Ascending aorta (tissue), 2 donors: ENCODE measurements at regions of chr7 and their contacts with region 1.

Region 1: GRCh38 chr7:148884299-148885022 is 370 bp upstream of the EZH2 start:
- DNase-seq: peak; percentile 75 to 95
- H3K4me3 ChIP-seq: peak overlapping the region; percentile 93
- H3K27ac ChIP-seq: peak overlapping the region; percentile 88 to 91
- H3K4me1 ChIP-seq: no peaks in the 10 kb centered on the region
- H3K27me3 ChIP-seq: no peaks in the 10 kb centered on the region
- CTCF ChIP-seq: no peak

Region 2: DNA sequence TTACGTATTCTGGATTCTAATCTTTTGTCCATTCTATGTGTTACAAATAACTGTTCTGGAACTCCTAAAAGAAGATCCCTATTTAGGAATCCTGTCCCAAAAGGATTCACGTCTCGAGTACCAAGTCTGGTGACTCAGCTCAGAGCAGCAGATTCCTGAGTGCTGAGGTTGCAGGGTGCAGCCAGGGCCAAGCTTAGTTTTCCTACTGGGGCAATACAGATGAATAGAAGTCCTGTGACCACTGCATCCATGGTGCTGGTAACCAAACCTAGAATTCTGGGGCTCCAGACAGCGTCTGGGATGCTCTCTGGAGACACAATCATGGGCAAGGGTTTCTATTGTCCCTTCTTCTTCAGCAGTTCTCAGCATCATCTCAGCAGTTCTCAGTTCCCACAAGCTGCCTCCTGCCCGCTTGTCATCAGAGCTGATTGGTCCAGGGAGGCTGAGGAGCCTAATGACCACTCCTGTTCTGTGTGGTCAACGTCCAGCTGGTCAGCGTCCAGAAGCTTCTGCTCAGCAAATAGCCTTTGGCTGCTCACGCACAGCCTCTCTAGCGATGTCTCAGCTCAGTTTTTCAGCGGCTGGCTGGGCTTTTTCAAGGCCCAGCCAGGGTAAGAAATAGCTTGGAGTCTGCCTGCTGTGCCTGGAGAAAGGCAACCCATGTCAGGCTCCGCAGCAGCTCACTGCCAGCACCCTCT is 344.3 kb before region 1 on chr7:
- intact Hi-C with region 1: loop called (anchors 10 kb)
- DNase-seq: peak; percentile 48 to 88
- H3K4me3 ChIP-seq: peak overlapping the region in 1 of 2 donors; percentile 30
- H3K27ac ChIP-seq: peak overlapping the region; percentile 77 to 83
- H3K4me1 ChIP-seq: no peaks in the 10 kb centered on the region
- H3K27me3 ChIP-seq: no peaks in the 10 kb centered on the region
- CTCF ChIP-seq: no peak

Region 3: DNA sequence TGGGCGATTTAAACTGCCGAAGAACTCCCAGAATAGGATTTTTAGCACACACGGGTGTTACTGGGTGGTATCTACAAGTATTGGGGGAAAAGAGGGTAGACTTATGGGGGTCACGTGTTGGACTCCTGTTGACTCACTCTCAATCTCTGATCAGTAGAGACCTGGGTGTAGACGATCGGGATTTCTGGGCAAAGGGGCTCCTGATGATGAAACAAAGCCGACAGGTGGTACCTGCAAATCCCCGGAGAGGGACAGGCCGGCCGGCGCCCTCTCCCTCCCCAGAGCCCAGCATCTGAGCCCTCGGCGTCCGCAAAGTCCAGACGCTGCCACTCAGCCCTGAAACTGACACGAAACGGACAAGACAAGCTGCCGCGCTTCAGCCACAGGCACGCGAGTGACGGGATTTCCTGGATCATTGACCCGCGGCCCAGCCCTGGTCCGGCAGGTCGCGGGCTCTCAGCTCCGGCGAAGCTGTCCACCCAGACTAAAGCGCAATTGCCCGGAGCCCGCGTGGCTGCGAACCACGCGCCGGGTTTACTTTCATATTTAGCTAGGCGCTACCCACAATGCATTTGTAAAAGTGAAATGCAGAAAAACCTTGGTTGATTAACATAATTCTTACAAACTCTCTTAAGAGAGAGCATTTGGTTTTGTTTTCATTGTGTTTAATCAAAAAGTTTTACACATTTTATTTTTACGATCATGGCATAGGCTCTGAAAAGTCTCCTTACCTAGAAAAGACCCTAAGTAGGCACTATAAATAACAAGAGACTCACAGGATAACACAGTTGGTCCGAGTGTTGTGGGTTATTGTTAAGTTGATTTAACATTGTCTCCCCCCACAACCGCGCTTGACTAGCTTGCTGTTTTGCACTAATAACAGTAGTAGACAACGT is 56.5 kb after region 1 on chr7:
- intact Hi-C with region 1: loop called (anchors 1 kb)
- DNase-seq: peak; percentile 38 to 90
- H3K4me3 ChIP-seq: peak overlapping the region; percentile 84 to 86
- H3K27ac ChIP-seq: peak overlapping the region; percentile 90 to 93
- H3K4me1 ChIP-seq: no peaks in the 10 kb centered on the region
- H3K27me3 ChIP-seq: no peaks in the 10 kb centered on the region
- CTCF ChIP-seq: no peak

Region 4: DNA sequence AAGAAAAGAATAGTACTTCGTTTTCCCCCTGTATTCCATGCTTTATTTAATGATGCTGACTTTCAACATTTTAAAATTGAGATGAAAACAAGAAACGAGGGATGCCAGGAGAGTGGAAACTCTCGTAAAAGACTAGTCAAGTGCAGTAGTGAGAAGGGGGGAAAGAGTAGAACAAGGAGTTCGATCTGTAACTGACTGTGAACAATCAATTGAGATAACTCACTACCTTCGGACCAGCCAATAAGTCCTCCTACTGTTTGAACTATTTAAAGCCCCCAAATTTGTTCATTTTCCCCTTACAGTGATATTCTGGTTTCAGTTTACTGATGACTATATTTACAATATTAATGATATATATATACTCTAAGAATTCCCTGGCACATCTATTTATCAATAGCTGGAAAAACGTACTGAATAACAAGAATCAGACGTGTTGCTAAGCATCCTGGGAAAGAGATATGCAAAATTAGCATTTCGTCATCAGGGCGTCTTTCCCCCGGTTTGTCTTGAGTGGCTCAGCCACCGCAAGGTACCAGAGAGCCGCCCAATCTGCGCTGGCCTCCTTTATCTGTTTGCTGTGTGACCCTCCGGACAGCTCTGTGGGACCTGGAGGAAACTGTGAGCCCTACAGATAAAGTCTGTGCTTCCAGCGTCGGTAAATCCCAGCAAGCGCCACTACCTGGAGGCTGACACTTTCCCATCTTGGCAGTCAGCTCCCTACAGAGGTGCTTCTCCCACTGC is 102.7 kb after region 1 on chr7:
- intact Hi-C with region 1: loop called (anchors 1 kb)
- DNase-seq: peak; percentile 47 to 93
- H3K4me3 ChIP-seq: peak overlapping the region; percentile 70 to 72
- H3K27ac ChIP-seq: peak overlapping the region; percentile 88 to 94
- H3K4me1 ChIP-seq: peaks cover 0 to 16% of the 10 kb centered on the region in 2 donors
- H3K27me3 ChIP-seq: no peaks in the 10 kb centered on the region
- CTCF ChIP-seq: no peak

Region 5: DNA sequence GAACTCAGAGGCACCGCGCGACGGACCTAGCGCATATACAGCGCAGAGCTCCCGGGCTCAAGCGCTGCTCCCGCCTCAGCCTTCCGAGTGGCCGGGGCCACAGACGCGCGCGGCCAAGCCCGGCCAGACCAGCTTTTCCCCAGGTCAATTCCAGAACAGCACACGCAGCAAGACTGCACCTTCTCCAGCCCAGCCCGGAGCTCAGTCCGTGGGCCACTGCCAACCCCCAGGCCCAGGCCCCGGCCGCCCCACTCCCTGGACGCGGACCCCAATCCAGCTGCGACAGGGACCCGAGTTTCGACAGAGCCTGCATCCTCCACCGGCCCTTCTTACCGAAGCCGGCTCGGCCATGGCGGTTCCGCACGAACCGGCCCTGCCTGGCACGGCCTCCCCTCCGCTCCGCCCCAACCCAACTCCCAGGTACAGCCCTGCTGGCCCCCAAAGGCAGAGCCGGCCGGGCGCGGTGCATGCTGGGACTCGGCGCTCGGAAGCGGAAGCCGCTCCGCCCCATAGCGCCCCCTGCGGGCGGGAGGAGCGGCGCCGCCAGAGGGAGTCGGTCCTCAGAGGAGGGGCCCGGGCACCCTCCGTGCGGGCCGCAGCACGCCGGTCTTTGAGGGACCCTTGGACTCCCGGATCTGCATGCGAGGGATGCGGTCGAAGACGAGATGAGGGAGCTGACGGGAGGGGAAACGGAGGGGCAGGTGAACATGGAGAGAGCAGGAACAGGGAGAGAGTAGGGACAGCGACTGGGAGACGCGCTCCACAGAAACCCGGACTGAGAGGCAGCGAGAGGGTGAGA is 241.6 kb after region 1 on chr7 and contains the start of gene ZNF425:
- intact Hi-C with region 1: loop called (anchors 10 kb)
- DNase-seq: peak; percentile 49 to 96
- H3K4me3 ChIP-seq: peak within 1 kb of the TSS; percentile 88 to 92
- H3K27ac ChIP-seq: peak within 1 kb of the TSS; percentile 82 to 96
- H3K4me1 ChIP-seq: peaks cover 6 to 8% of the 10 kb centered on the region in 2 donors
- H3K27me3 ChIP-seq: no peaks in the 10 kb centered on the region
- CTCF ChIP-seq: peak; percentile 96 to 97 (median 97)
- total RNA-seq, gene ZNF425: not detected

Region 6: GRCh38 chr7:149771721-149772240 is 887.3 kb after region 1 on chr7:
- intact Hi-C with region 1: loop called (anchors 5 kb)
- DNase-seq: peak; percentile 68 to 93
- H3K4me3 ChIP-seq: peak overlapping the region; percentile 83 to 87
- H3K27ac ChIP-seq: no peak overlapping the region
- H3K4me1 ChIP-seq: peaks cover 5 to 10% of the 10 kb centered on the region in 2 donors
- H3K27me3 ChIP-seq: no peaks in the 10 kb centered on the region
- CTCF ChIP-seq: no peak